Activated B cell treated with CpG ODN at 0.5 μM for 24 hours (primary cell): ENCODE measurements at regions of chr9 and their contacts with region 1.

Region 1: GRCh38 chr9:135907431-135908092 is at the start of gene CAMSAP1:
- DNase-seq: peak; percentile 94
- ATAC-seq: peak; percentile 90
- H3K4me3 Mint-ChIP-seq: peak within 1 kb of the TSS; percentile 78
- H3K27ac Mint-ChIP-seq: peak within 1 kb of the TSS; percentile 69
- H3K4me1 Mint-ChIP-seq: peaks cover 44% of the 10 kb centered on the region
- H3K27me3 Mint-ChIP-seq: no peaks in the 10 kb centered on the region
- CTCF ChIP-seq: no peak
- total RNA-seq, gene CAMSAP1: 16.9 and 23.7 TPM in 2 replicates

Region 2: GRCh38 chr9:135864447-135865049 is 43.0 kb before region 1 on chr9:
- CTCF ChIA-PET with region 1: no interaction called
- POLR2A ChIA-PET with region 1: no interaction called
- intact Hi-C with region 1: loop called (anchors 5 kb)
- DNase-seq: peak; percentile 54
- ATAC-seq: peak; percentile 42
- H3K4me3 Mint-ChIP-seq: no peak overlapping the region
- H3K27ac Mint-ChIP-seq: no peak overlapping the region
- H3K4me1 Mint-ChIP-seq: peaks cover 7% of the 10 kb centered on the region
- H3K27me3 Mint-ChIP-seq: no peaks in the 10 kb centered on the region
- CTCF ChIP-seq: peak; percentile 36

Region 3: GRCh38 chr9:135887585-135888050 is 19.9 kb before region 1 on chr9:
- CTCF ChIA-PET with region 1: no interaction called
- POLR2A ChIA-PET with region 1: no interaction called
- intact Hi-C with region 1: loop called (anchors 1 kb)
- DNase-seq: peak; percentile 41
- ATAC-seq: peak; percentile 98
- H3K4me3 Mint-ChIP-seq: peak overlapping the region; percentile 77
- H3K27ac Mint-ChIP-seq: peak overlapping the region; percentile 64
- H3K4me1 Mint-ChIP-seq: peaks cover 50% of the 10 kb centered on the region
- H3K27me3 Mint-ChIP-seq: no peaks in the 10 kb centered on the region
- CTCF ChIP-seq: no peak

Region 4: DNA sequence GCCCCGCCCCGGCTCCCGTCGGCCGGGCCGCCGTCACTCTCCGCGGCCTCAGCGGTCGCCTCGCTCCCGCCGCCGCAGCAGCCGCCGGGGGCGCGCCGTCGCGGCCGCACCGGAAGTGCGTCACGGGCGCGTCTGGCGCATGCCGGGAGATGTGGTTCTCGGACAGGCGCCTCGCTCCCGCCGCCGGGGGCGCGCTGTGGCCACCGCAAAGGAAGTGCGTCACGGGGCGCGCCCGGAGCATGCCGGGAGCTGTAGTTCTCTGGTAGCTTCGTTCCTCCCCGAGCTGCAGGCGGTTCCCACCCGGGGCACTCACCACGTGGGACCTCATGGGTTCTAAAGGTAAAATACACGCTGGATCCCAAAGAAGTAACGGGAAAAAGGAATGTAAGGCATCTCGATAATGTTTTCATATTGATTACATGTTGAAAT is 53.7 kb after region 1 on chr9 and contains the start of gene UBAC1:
- CTCF ChIA-PET with region 1: no interaction called
- POLR2A ChIA-PET with region 1: no interaction called
- intact Hi-C with region 1: loop called (anchors 1 kb)
- DNase-seq: peak; percentile 99
- ATAC-seq: peak; percentile 91
- H3K4me3 Mint-ChIP-seq: peak within 1 kb of the TSS; percentile 87
- H3K27ac Mint-ChIP-seq: peak within 1 kb of the TSS; percentile 76
- H3K4me1 Mint-ChIP-seq: peaks cover 29% of the 10 kb centered on the region
- H3K27me3 Mint-ChIP-seq: peaks cover 9% of the 10 kb centered on the region
- CTCF ChIP-seq: no peak
- total RNA-seq, gene UBAC1: 24.3 and 25.5 TPM in 2 replicates

Region 5: GRCh38 chr9:136267261-136268111 is 359.9 kb after region 1 on chr9:
- CTCF ChIA-PET with region 1: no interaction called
- POLR2A ChIA-PET with region 1: no interaction called
- intact Hi-C with region 1: loop called (anchors 1 kb)
- DNase-seq: peak; percentile 72
- ATAC-seq: peak; percentile 97
- H3K4me3 Mint-ChIP-seq: peak overlapping the region; percentile 80
- H3K27ac Mint-ChIP-seq: peak overlapping the region; percentile 70
- H3K4me1 Mint-ChIP-seq: peaks cover 11% of the 10 kb centered on the region
- H3K27me3 Mint-ChIP-seq: no peaks in the 10 kb centered on the region
- CTCF ChIP-seq: no peak